Panc1 (cell line): ENCODE measurements at regions of chr19 and their contacts with region 1.

Region 1: DNA sequence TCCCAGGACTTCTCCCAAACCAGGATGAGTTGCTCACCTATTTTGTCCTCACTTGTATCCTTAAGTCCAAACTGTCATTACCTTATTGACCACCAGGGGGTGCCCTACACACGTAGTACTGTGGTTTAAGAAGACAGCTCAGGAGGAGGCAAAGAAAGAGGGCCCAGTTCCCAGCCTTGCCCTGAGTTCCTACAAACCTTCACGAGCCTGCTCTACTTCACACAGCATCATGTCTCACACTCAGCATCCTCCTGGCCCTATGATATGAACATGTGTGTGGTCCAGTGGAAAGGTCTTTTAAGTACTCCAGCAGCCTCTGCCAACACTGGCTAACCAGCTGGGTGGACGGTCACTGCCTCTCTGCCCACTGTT is 8.1 kb upstream of the ZNF784 start:
- DNase-seq: peak; percentile 88
- ATAC-seq: peak; percentile 74
- H3K4me3 ChIP-seq: peak overlapping the region in 1 of 2 experiments; percentile 14; a peak in 1 of 4 replicates
- H3K27ac ChIP-seq: no peak overlapping the region
- H3K4me1 ChIP-seq: peaks cover 16% of the 10 kb centered on the region
- H3K27me3 ChIP-seq: no peaks in the 10 kb centered on the region
- CTCF ChIP-seq: peak; percentile 87

Region 2: GRCh38 chr19:55646889-55647731 is 14.7 kb after region 1 on chr19:
- CTCF ChIA-PET with region 1: interaction called, 11 read pairs
- POLR2A ChIA-PET with region 1: interaction called, 6 read pairs
- in situ Hi-C with region 1: no loop called
- intact Hi-C with region 1: no loop called
- DNase-seq: no peak
- ATAC-seq: no peak
- H3K4me3 ChIP-seq: peak overlapping the region; percentile 70 to 78
- H3K27ac ChIP-seq: peak overlapping the region; percentile 94
- H3K4me1 ChIP-seq: peaks cover 45% of the 10 kb centered on the region
- H3K27me3 ChIP-seq: no peaks in the 10 kb centered on the region
- CTCF ChIP-seq: no peak

Region 3: GRCh38 chr19:56162258-56162657 is 529.8 kb after region 1 on chr19:
- CTCF ChIA-PET with region 1: no interaction called
- POLR2A ChIA-PET with region 1: no interaction called
- in situ Hi-C with region 1: no loop called
- intact Hi-C with region 1: no loop called
- DNase-seq: no peak
- ATAC-seq: peak; percentile 52; the same call in 1 of the 2 replicates
- H3K4me3 ChIP-seq: no peak overlapping the region
- H3K27ac ChIP-seq: no peak overlapping the region
- H3K4me1 ChIP-seq: no peaks in the 10 kb centered on the region
- H3K27me3 ChIP-seq: no peaks in the 10 kb centered on the region
- CTCF ChIP-seq: no peak